Right ventricle myocardium inferior (tissue), 1 donor: ENCODE measurements at regions of chr18 and their contacts with region 1.

Region 1: DNA sequence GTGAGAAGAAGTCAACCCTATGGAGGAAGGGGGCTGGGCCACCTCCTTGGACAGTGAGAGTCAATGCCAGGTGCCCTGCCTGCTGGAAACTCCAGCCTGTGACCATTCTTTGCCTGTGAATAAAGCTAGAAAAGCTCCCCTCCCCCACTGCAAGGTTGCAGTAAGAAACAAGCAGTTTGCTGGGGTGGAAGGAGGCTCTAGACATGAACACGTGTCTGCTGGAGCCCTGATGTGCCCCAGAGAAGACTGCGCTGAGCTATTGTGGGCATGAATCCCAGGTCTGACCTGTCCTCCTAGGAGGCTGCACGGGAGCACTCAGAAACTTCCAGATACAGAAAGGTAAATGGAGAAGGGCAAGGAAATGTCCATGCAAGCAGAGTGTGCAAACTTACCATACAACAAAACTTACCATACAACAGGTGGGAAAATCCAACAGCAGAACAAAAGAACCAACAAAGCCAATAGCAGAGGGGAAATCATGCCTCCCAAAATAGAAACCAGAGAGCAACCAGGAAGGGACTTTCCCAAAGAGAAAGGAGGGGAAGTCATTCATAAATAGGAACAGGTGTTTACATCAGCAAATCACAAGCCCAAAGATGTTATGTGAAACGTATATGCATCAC is 278.7 kb downstream of the BCL2 start:
- DNase-seq: no peak
- ATAC-seq: no peak

Region 2: GRCh38 chr18:63087517-63088175 is 46.7 kb after region 1 on chr18:
- intact Hi-C with region 1: loop called (anchors 2 kb)
- DNase-seq: no peak
- ATAC-seq: no peak